RWPE1 (cell line): ENCODE measurements at regions of chr9 and their contacts with region 1.

Region 1: DNA sequence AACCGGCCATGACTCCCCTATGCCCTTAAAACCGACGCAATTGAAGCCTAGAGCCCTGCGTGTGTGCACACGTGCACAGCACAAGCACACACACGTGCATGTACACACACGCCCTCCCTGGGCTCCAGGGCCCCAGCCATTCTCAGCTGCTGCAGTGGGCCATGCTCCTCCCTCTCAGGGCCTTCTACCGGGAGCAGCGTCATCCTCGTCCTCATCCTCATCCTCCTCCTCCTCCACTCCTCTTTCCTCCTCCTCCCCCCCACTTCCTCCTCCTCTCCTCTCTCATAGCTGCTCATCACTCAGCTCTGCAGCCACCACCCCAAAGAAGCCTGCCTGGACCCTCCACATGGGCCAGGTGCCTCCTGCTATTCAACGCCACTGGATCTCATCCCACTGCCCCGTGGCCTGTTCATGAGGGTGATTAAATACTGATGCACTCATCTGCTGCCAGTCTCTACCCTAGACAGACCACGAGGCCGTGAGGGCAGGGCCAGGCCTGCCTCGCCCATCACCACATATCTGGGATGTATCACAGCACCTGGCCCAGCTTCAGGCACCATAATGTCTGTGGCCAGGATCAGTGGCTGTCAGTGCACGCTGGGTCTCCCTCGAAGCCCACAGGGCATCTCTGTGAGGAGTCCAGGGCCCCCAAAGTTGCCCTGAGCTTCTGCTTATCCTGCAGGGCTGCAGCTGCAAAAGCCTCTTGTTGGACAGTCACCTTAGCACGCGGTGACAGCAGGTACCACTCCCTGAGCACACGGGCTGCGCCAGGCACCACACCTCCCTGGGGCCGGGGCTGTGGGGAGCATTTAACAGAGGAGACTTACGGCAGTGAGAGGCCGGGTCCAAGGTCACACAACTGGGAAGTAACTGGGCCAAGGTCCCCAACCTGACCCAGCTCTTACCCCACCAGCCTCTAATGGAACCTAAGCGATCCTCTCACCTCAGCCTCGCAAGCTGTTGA is 9.8 kb downstream of the FAM78A start:
- DNase-seq: no peak
- H3K27ac ChIP-seq: no peak overlapping the region
- CTCF ChIP-seq: no peak

Region 2: DNA sequence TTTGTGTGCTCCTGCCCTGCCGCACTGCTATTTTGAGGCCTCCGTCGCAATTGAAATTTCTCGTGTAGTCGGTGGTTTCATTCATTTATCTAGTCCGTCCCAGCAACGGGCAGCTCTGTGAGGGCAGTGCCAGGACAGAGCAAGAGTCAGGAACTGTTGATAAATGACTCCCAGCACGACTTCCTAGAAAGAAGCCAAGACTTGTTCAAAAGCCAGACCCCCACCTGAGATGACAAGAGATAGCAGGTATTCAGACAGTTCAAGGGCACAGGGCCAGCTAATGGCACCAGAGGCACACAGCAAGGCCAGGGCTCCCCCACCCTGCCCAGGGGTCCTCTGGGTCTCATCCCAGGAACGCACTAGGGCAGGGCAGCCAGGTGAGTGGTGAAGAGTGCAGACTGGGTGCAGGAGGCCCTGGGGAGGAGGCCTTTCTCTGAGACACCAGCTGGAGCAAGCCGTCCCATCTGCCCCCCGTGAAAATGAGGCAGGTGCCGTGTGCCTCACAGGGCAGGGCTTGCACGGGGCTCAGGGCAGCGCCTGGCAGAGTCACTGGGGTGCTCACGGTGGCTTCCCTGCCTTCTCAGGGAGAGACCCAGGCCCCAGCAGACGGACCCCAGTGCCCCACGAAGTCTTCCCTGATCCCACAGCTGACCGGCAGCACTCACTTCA is 27.1 kb before region 1 on chr9:
- CTCF ChIA-PET with region 1: no interaction called
- POLR2A ChIA-PET with region 1: interaction called, 14 read pairs
- DNase-seq: no peak
- H3K27ac ChIP-seq: no peak overlapping the region
- CTCF ChIP-seq: no peak